ENCODE measurements at regions of chr19 and their contacts with region 1.

Region 1: GRCh38 chr19:12139885-12140547 is at the start of gene ZNF20:
- DNase-seq: peak; percentile 85
- ATAC-seq: peak; percentile 96
- H3K4me3 Mint-ChIP-seq: peak within 1 kb of the TSS; percentile 97
- H3K27ac Mint-ChIP-seq: peak within 1 kb of the TSS; percentile 83
- H3K4me1 Mint-ChIP-seq: peaks cover 33% of the 10 kb centered on the region
- H3K27me3 Mint-ChIP-seq: no peaks in the 10 kb centered on the region
- CTCF ChIP-seq: no peak
- total RNA-seq, gene ZNF20: 4.2 and 8.5 TPM in 2 replicates

Region 2: GRCh38 chr19:11558881-11559828 is 580.9 kb before region 1 on chr19 and contains the start of gene ELOF1:
- CTCF ChIA-PET with region 1: no interaction called
- POLR2A ChIA-PET with region 1: no interaction called
- intact Hi-C with region 1: no loop called
- DNase-seq: peak; percentile 88
- ATAC-seq: peak; percentile 86
- H3K4me3 Mint-ChIP-seq: peak within 1 kb of the TSS; percentile 98
- H3K27ac Mint-ChIP-seq: peak within 1 kb of the TSS; percentile 93
- H3K4me1 Mint-ChIP-seq: peaks cover 72% of the 10 kb centered on the region
- H3K27me3 Mint-ChIP-seq: no peaks in the 10 kb centered on the region
- CTCF ChIP-seq: no peak
- total RNA-seq, gene ELOF1: 61.7 and 66.1 TPM in 2 replicates

Region 3: DNA sequence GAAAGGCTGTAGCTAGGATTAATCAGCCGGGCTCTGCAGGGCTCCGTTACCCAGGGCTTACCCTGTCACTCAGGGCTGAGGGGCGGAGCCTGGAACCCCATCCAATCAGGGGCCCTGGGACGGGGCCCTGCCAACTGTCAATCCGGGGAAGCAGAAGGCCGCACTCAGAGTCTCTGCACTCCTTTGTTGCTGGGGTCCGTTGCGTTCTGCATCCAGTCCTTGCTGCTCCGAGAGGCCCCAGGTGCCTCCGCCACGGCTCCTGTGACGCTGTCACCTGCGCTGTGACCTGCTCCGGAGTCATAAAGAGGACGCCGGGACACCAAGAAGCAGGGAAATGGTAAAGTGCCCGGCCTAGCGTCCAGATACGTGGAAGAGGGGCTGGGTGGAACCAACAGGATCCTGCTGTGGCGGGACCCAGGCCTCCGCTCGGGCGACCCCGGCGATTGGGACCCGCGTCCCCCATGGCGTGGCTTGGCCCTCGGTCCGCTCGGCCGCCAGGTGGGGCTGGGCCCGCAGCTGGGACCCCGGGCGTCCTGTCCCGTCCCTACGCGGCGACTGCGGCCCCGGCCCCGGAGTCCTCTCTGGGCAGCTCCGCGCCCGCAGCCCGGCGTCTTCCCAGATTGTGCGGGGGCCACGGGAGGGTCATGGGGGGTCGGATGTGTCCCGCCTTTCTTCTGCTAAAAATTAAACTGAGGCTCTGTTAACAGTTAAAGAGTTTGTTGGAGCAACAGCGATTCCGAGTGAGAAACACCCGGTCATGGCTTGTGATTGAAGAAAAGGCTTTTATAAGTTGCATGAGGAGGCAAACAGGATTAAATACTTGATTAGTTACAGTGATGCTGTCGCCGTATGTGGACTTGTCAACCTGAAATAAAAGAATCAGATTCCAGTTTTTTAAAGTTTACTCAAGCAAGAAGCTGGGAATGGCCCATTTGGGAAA is 341.4 kb before region 1 on chr19 and contains the start of gene ZNF491:
- CTCF ChIA-PET with region 1: interaction called, 19 read pairs
- POLR2A ChIA-PET with region 1: interaction called, 8 read pairs
- intact Hi-C with region 1: loop called (anchors 1 kb)
- DNase-seq: peak; percentile 77
- ATAC-seq: peak; percentile 99
- H3K4me3 Mint-ChIP-seq: peak within 1 kb of the TSS; percentile 91
- H3K27ac Mint-ChIP-seq: peak within 1 kb of the TSS; percentile 71
- H3K4me1 Mint-ChIP-seq: peaks cover 25% of the 10 kb centered on the region
- H3K27me3 Mint-ChIP-seq: no peaks in the 10 kb centered on the region
- CTCF ChIP-seq: no peak
- total RNA-seq, gene ZNF491: 1.4 and 1.7 TPM in 2 replicates

Region 4: DNA sequence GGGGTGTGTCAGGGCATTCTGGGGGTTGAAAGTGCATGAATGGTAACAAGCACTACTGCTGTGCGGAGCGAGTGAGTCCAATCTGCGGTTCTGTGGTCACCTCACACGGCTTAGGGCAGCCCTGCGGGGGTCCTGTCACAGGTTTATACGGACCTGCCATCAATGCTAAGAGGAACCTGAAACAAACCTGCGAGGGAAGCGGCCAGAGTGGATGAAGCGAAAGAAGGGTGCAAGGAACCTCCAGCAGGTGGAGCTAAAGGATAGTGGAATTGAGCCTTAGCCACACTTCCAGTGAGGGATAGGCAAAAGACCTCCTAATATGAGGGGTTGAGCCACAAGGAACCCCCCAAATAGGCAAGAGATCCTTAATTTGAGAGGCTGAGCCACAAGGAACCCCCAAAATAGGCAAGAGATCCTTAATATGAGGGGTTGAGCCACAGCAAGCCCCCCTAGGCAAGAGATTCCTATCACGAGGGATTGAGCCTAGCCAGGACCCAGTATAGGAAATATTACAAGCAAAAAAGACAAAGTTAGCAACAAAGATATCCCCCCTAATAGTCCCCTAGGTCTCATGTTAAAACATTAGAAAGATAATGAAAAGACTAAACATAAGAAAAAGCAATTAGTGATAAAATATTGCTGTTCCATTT is 258.7 kb before region 1 on chr19:
- CTCF ChIA-PET with region 1: interaction called, 18 read pairs
- POLR2A ChIA-PET with region 1: no interaction called
- intact Hi-C with region 1: loop called (anchors 1 kb)
- DNase-seq: peak; percentile 27
- ATAC-seq: peak; percentile 82
- H3K4me3 Mint-ChIP-seq: no peak overlapping the region
- H3K27ac Mint-ChIP-seq: no peak overlapping the region
- H3K4me1 Mint-ChIP-seq: peaks cover 2% of the 10 kb centered on the region
- H3K27me3 Mint-ChIP-seq: no peaks in the 10 kb centered on the region
- CTCF ChIP-seq: no peak

Region 5: GRCh38 chr19:12064590-12065538 is 75.2 kb before region 1 on chr19 and contains the start of gene ZNF844:
- CTCF ChIA-PET with region 1: interaction called, 34 read pairs
- POLR2A ChIA-PET with region 1: interaction called, 10 read pairs
- intact Hi-C with region 1: no loop called
- DNase-seq: peak; percentile 81
- ATAC-seq: peak; percentile 95
- H3K4me3 Mint-ChIP-seq: peak within 1 kb of the TSS; percentile 92
- H3K27ac Mint-ChIP-seq: peak within 1 kb of the TSS; percentile 93
- H3K4me1 Mint-ChIP-seq: peaks cover 14% of the 10 kb centered on the region
- H3K27me3 Mint-ChIP-seq: no peaks in the 10 kb centered on the region
- CTCF ChIP-seq: no peak
- total RNA-seq, gene ZNF844: 24.8 and 27.7 TPM in 2 replicates

Region 6: GRCh38 chr19:12162882-12163806 is 23.1 kb after region 1 on chr19 and contains the start of gene ZNF136:
- CTCF ChIA-PET with region 1: interaction called, 3 read pairs
- POLR2A ChIA-PET with region 1: interaction called, 11 read pairs
- intact Hi-C with region 1: loop called (anchors 2 kb)
- DNase-seq: peak; percentile 83
- ATAC-seq: peak; percentile 99
- H3K4me3 Mint-ChIP-seq: peak within 1 kb of the TSS; percentile 96
- H3K27ac Mint-ChIP-seq: peak within 1 kb of the TSS; percentile 97
- H3K4me1 Mint-ChIP-seq: peaks cover 44% of the 10 kb centered on the region
- H3K27me3 Mint-ChIP-seq: no peaks in the 10 kb centered on the region
- CTCF ChIP-seq: no peak
- total RNA-seq, gene ZNF136: 20.4 and 24.6 TPM in 2 replicates

Region 7: DNA sequence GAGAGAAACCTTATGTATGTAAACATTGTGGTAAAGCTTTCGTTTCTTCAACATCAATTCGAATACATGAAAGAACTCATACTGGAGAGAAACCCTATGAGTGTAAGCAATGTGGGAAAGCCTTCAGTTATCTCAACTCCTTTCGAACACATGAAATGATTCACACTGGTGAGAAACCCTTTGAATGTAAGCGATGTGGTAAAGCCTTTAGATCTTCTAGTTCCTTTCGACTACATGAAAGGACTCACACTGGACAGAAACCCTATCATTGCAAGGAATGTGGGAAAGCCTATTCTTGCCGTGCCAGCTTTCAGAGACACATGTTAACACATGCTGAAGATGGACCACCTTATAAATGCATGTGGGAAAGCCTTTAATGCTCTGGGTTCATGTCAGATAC is 47.6 kb after region 1 on chr19:
- CTCF ChIA-PET with region 1: no interaction called
- POLR2A ChIA-PET with region 1: no interaction called
- intact Hi-C with region 1: no loop called
- DNase-seq: no peak
- ATAC-seq: no peak
- H3K4me3 Mint-ChIP-seq: no peak overlapping the region
- H3K27ac Mint-ChIP-seq: no peak overlapping the region
- H3K4me1 Mint-ChIP-seq: no peaks in the 10 kb centered on the region
- H3K27me3 Mint-ChIP-seq: no peaks in the 10 kb centered on the region
- CTCF ChIP-seq: no peak

Region 8: GRCh38 chr19:12217332-12217731 is 77.3 kb after region 1 on chr19:
- CTCF ChIA-PET with region 1: no interaction called
- POLR2A ChIA-PET with region 1: no interaction called
- intact Hi-C with region 1: no loop called
- DNase-seq: no peak
- ATAC-seq: no peak
- H3K4me3 Mint-ChIP-seq: no peak overlapping the region
- H3K27ac Mint-ChIP-seq: no peak overlapping the region
- H3K4me1 Mint-ChIP-seq: no peaks in the 10 kb centered on the region
- H3K27me3 Mint-ChIP-seq: no peaks in the 10 kb centered on the region
- CTCF ChIP-seq: no peak

Region 9: DNA sequence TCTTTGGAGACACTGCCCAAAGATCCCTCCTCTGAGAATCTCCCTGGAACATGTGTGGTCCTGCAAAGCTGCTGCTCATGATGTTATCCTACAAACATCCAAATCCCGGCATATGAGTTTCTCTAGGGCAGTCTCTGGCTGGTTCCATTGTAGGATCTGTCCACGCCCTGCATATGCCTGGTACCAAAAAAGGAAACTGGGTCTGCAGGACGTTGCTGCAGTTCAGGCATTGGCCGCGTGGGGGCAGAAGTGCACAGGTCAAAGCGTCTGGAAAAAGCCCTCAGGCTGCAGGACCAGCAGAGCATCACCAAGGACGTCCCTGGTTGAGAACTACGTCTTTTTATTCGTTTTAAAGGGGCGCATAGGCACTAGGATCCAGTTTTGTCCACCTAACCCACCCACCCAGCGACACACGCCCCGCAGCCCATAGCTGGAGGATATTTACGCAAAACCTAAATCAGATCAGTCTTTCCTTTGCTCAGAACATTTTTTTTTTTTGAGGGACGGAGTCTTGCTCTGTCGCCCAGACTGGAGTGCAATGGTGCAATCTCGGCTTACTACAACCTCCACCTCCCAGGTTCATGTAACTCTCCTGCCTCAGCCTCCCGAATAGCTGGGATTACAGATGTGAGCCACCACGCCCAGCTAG is 424.1 kb after region 1 on chr19:
- CTCF ChIA-PET with region 1: no interaction called
- POLR2A ChIA-PET with region 1: no interaction called
- intact Hi-C with region 1: no loop called
- DNase-seq: peak; percentile 91
- ATAC-seq: peak; percentile 100
- H3K4me3 Mint-ChIP-seq: no peak overlapping the region
- H3K27ac Mint-ChIP-seq: no peak overlapping the region
- H3K4me1 Mint-ChIP-seq: peaks cover 6% of the 10 kb centered on the region
- H3K27me3 Mint-ChIP-seq: no peaks in the 10 kb centered on the region
- CTCF ChIP-seq: no peak

Measured in activated B cell treated with CpG ODN at 0.5 μM for 24 hours (primary cell).